CD4-positive, alpha-beta T cell (primary cell): ENCODE measurements at regions of chr20 and their contacts with region 1.

Region 1: DNA sequence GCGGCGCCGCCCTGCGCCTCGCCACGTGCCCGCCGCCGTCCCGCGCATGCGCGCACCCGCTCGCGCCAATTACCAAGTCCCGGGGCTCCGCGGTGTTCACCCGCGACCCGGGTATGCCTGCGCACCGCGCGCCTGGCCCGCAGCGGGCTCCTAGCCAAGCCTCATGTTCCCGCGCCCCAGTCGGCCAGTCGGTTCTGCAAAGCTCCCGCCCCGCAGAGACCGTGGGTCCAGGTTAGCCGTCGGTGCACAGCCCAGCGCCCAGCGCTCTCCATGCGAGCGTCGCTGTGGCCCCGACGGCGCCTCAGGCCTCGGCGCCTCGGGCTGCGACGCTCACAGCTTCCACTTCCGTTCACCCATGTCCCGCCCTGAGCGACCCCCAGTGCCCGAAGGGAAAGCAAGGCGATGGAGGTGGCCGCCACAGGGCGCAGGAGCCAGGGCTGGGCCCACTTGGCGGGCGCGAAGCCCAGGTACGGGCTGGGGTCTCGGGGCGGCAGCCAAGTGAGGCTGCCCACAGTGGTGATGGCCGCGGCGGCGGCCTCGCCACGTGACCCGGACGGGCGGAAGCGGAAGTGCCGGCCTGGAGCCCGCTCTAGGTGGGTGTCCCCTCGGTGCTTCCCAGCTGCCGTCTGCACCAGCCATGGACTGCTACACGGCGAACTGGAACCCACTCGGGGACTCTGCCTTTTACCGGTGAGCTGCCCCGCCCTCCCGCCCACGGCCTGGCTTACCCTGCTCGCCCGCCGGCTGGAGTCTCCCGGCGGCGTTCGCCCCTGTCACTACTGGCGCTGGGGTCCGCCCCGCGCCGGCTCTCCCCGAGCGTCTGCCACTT is at the starts of genes PCED1A and VPS16:
- DNase-seq: peak; percentile 78 to 94 (median 86)
- ATAC-seq: peak; percentile 95
- H3K4me3 ChIP-seq: peak within 1 kb of the TSS; percentile 93
- H3K4me3 Mint-ChIP-seq: peak within 1 kb of the TSS; percentile 93
- H3K27ac ChIP-seq: peak within 1 kb of the TSS; percentile 61 to 81
- H3K27ac Mint-ChIP-seq: peak within 1 kb of the TSS; percentile 75
- H3K4me1 ChIP-seq: peaks cover 31% of the 10 kb centered on the region
- H3K4me1 Mint-ChIP-seq: peaks cover 53% of the 10 kb centered on the region
- H3K27me3 ChIP-seq: no peaks in the 10 kb centered on the region
- H3K27me3 Mint-ChIP-seq: no peaks in the 10 kb centered on the region
- CTCF ChIP-seq: no peak
- total RNA-seq, gene PCED1A: 69.2 to 69.7 TPM
- total RNA-seq, gene VPS16: 38.2 to 40.6 TPM

Region 2: DNA sequence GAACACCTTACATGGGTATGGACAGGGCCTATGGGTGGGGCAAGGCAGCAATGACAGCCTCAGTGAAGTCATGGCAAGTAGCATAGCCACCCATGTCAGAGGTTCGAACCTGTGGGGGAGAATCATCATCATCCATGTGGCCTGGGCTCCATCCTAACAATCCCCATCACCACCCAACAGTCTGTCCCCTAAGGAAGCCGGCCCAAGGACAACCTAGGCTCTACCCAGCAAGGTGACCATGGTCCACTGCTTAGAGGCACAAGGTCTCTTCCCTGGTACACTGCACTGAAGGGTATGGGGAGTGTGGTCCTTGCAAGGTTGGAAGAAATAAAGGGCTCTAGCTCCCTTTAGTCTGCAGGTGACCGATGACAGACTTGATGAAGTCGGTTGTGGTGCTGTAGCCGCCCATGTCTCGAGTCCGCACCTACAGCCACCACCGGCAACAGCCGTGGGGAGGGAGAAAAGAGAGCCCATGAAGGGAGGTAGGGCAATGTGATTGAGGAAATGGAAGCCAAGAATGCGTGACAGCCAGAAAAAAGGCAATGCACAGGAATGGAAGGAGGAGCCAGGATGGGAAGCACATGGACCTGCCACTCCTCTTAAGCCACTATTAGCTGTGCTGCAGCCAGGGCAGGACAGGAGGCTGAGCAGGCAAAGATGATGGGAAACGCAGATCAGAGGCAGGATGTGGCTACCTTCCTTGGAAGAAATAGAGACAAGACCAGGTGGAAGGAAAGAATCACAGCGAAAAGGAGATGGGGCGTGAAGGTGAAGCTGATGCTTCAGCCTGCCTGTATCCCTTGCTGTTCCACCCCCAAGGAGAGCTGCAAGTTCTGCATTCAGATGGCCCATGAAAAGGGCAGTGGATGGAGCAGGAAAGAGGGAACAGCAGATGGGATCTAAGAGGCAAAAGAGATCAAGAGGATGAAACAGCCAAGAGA is 181.7 kb before region 1 on chr20:
- CTCF ChIA-PET with region 1: no interaction called
- POLR2A ChIA-PET with region 1: no interaction called
- intact Hi-C with region 1: loop called in 1 of 2 experiments (anchors 5 kb)
- DNase-seq: no peak
- ATAC-seq: peak; percentile 22
- H3K4me3 ChIP-seq: no peak overlapping the region
- H3K4me3 Mint-ChIP-seq: peak overlapping the region; percentile 22
- H3K27ac ChIP-seq: no peak overlapping the region
- H3K27ac Mint-ChIP-seq: peak overlapping the region; percentile 61
- H3K4me1 ChIP-seq: peaks cover 32% of the 10 kb centered on the region
- H3K4me1 Mint-ChIP-seq: peaks cover 40% of the 10 kb centered on the region
- H3K27me3 ChIP-seq: no peaks in the 10 kb centered on the region
- H3K27me3 Mint-ChIP-seq: no peaks in the 10 kb centered on the region
- CTCF ChIP-seq: no peak

Region 3: DNA sequence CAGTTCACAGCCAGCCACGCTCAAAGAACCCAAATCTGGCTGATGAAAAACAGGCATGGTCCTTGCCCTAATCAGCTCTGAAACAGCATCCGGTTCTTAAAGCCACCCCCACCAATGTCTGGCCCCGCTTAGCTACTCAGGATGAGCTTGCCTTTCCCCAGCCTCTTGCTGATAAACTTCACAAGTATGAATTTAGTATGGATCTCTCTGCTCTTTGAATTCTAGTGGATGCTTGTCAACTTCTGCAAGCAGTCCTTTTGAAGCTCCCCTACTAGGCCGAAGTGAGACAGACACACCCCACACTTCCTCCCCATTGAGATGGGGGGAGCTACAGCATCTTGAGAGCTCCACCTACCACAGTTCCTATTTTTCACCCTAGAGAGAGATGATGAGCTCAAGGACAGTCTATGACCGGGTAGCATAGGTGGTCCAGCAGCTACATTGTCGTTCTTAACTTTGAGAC is 111.1 kb before region 1 on chr20:
- CTCF ChIA-PET with region 1: no interaction called
- POLR2A ChIA-PET with region 1: interaction called, 10 read pairs
- intact Hi-C with region 1: no loop called
- DNase-seq: peak in 11 of 14 experiments; percentile 25 to 78 (median 38)
- ATAC-seq: peak; percentile 97
- H3K4me3 ChIP-seq: no peak overlapping the region
- H3K4me3 Mint-ChIP-seq: peak overlapping the region; percentile 66
- H3K27ac ChIP-seq: peak overlapping the region; percentile 47 to 53
- H3K27ac Mint-ChIP-seq: peak overlapping the region; percentile 88
- H3K4me1 ChIP-seq: peaks cover 19% of the 10 kb centered on the region
- H3K4me1 Mint-ChIP-seq: peaks cover 33% of the 10 kb centered on the region
- H3K27me3 ChIP-seq: no peaks in the 10 kb centered on the region
- H3K27me3 Mint-ChIP-seq: no peaks in the 10 kb centered on the region
- CTCF ChIP-seq: no peak

Region 4: DNA sequence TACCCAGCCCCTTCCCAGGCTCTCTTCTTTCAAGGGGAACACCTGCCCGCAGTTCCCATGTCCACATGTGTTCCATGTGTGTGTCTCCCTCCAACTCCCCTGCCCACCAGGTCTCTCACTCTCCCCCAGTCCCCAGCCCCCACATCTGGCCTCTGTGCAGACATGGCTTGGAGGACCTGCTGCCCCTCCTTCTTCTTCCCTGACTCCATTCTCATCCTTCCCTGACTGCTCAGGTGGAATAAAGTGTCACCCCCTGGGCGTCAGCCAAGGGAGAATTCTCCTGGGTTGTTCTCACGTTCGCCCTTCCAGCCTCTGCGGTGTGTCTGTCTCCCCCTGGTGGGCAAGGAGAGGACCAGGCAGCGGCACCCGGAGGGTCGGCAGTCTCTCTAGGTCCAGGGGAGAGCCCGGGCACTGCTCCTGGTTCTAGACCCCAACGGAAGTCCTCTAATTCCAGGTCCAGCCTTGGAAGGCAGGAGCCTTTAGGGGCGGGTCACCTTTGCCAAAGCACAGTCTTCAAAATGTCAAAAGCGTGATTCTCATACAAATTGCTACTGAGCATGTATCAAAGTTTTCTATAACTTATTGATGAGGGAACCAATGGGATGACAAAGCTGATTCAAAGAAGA is 97.3 kb before region 1 on chr20:
- CTCF ChIA-PET with region 1: no interaction called
- POLR2A ChIA-PET with region 1: interaction called, 10 read pairs
- intact Hi-C with region 1: loop called in 1 of 2 experiments (anchors 5 kb)
- DNase-seq: peak; percentile 60 to 88 (median 70)
- ATAC-seq: peak; percentile 54
- H3K4me3 ChIP-seq: no peak overlapping the region
- H3K4me3 Mint-ChIP-seq: peak overlapping the region; percentile 59
- H3K27ac ChIP-seq: peak overlapping the region in 1 of 2 donors; percentile 60
- H3K27ac Mint-ChIP-seq: peak overlapping the region; percentile 90
- H3K4me1 ChIP-seq: peaks cover 47% of the 10 kb centered on the region
- H3K4me1 Mint-ChIP-seq: peaks cover 51% of the 10 kb centered on the region
- H3K27me3 ChIP-seq: no peaks in the 10 kb centered on the region
- H3K27me3 Mint-ChIP-seq: no peaks in the 10 kb centered on the region
- CTCF ChIP-seq: peak; percentile 90

Region 5: GRCh38 chr20:2752567-2753460 is 87.5 kb before region 1 on chr20:
- CTCF ChIA-PET with region 1: interaction called, 4 read pairs
- POLR2A ChIA-PET with region 1: interaction called, 5 read pairs
- intact Hi-C with region 1: loop called in 1 of 2 experiments (anchors 5 kb)
- DNase-seq: peak in 13 of 14 experiments; percentile 19 to 76 (median 47)
- ATAC-seq: peak; percentile 37
- H3K4me3 ChIP-seq: peak overlapping the region; percentile 60
- H3K4me3 Mint-ChIP-seq: peak overlapping the region; percentile 90
- H3K27ac ChIP-seq: no peak overlapping the region
- H3K27ac Mint-ChIP-seq: no peak overlapping the region
- H3K4me1 ChIP-seq: peaks cover 40% of the 10 kb centered on the region
- H3K4me1 Mint-ChIP-seq: peaks cover 28% of the 10 kb centered on the region
- H3K27me3 ChIP-seq: peaks cover 12 to 13% of the 10 kb centered on the region in 2 experiments
- H3K27me3 Mint-ChIP-seq: peaks cover 17% of the 10 kb centered on the region
- CTCF ChIP-seq: peak; percentile 81

Region 6: DNA sequence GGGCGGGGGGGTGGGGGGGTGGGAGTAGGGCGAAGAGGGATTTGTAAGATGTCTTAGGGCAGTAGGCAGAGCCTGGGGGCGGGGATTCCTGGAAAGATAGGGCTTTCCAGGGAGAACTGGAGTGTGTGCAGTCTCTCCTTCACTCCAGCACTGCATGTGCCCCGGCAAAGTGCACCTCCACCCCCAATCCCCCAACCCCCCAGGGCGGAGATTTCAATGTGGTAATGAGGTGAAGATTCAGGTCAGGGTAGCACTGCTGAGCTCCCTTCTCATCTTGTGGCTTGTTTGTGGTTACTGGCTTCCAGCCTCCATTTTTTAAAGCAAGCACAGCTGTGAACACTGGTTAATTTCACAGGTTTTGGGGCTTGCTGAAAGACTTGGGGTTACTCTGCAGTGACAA is 18.3 kb before region 1 on chr20:
- CTCF ChIA-PET with region 1: no interaction called
- POLR2A ChIA-PET with region 1: interaction called, 13 read pairs
- intact Hi-C with region 1: no loop called
- DNase-seq: peak in 12 of 14 experiments; percentile 20 to 75 (median 38)
- ATAC-seq: peak; percentile 94
- H3K4me3 ChIP-seq: peak overlapping the region; percentile 26
- H3K4me3 Mint-ChIP-seq: peak overlapping the region; percentile 75
- H3K27ac ChIP-seq: no peak overlapping the region
- H3K27ac Mint-ChIP-seq: no peak overlapping the region
- H3K4me1 ChIP-seq: peaks cover 28% of the 10 kb centered on the region
- H3K4me1 Mint-ChIP-seq: peaks cover 38% of the 10 kb centered on the region
- H3K27me3 ChIP-seq: peaks cover 4 to 10% of the 10 kb centered on the region in 2 experiments
- H3K27me3 Mint-ChIP-seq: peaks cover 39% of the 10 kb centered on the region
- CTCF ChIP-seq: no peak

Region 7: DNA sequence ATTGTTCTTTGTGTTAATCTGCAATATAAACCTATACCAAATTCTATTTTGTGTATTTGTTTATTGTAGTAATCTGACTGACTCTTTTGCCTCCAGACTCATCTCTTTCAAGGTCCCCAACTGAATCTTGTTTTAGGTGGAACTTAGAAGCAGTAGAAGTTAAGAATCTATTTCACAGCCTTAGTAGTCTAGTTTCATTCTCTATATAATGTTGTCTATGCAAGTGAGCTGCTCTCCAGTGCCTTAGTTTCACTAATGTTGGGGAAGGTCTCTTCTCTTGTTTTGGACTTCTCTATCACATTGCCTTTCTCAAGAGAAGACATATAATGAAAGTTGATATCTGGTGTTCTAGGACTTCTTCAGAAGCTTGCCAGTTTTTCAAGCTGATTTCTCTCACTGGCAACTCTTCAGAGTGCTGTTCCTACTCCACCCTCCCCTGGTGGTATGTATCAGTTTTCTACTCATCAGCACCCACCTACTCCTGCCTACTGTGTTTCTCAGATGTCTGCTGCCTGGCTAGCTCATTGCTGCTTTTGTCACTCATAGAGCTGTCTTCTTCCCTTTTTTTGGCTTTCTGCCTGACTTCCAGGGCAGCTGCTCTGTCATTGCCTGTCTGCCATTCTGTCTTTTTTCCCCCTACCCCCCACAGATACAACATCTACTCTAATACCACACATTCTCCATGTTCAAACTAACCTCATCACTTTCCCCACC is 115.1 kb after region 1 on chr20:
- CTCF ChIA-PET with region 1: no interaction called
- POLR2A ChIA-PET with region 1: no interaction called
- intact Hi-C with region 1: no loop called
- DNase-seq: no peak
- ATAC-seq: no peak
- H3K4me3 ChIP-seq: no peak overlapping the region
- H3K4me3 Mint-ChIP-seq: no peak overlapping the region
- H3K27ac ChIP-seq: no peak overlapping the region
- H3K27ac Mint-ChIP-seq: no peak overlapping the region
- H3K4me1 ChIP-seq: no peaks in the 10 kb centered on the region
- H3K4me1 Mint-ChIP-seq: no peaks in the 10 kb centered on the region
- H3K27me3 ChIP-seq: no peaks in the 10 kb centered on the region
- H3K27me3 Mint-ChIP-seq: no peaks in the 10 kb centered on the region
- CTCF ChIP-seq: no peak

Region 8: DNA sequence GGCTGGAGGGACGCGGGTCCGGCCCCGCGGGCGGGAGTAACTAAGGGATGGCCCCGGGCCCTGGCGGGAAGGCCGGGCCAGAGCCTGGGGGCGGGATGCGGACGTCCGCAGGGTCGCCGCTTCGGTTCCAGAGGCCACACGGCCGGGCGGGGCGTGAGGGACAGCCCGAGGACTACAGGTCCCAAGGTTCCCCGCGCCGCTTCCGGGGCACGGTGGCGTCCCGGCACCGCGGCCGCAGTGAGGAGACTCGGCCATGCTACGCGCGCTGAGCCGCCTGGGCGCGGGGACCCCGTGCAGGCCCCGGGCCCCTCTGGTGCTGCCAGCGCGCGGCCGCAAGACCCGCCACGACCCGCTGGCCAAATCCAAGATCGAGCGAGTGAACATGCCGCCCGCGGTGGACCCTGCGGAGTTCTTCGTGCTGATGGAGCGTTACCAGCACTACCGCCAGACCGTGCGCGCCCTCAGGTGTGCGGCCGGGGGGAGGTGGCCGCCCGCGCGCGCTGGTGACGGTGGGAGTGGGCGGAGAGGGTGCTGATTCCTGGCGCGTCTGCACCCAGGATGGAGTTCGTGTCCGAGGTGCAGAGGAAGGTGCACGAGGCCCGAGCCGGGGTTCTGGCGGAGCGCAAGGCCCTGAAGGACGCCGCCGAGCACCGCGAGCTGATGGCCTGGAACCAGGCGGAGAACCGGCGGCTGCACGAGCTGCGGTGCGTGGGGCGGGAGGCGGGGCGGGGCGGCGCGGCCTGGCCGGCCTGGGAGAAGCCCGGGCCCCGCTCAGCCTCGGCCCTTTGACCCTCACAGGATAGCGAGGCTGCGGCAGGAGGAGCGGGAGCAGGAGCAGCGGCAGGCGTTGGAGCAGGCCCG is 205.7 kb after region 1 on chr20 and contains the start of gene MRPS26:
- CTCF ChIA-PET with region 1: no interaction called
- POLR2A ChIA-PET with region 1: no interaction called
- intact Hi-C with region 1: loop called in 1 of 2 experiments (anchors 5 kb)
- DNase-seq: peak; percentile 57 to 87 (median 76)
- ATAC-seq: peak; percentile 86
- H3K4me3 ChIP-seq: peak within 1 kb of the TSS; percentile 76
- H3K4me3 Mint-ChIP-seq: peak within 1 kb of the TSS; percentile 95
- H3K27ac ChIP-seq: peak within 1 kb of the TSS; percentile 48 to 49
- H3K27ac Mint-ChIP-seq: peak within 1 kb of the TSS; percentile 83
- H3K4me1 ChIP-seq: peaks cover 27% of the 10 kb centered on the region
- H3K4me1 Mint-ChIP-seq: peaks cover 21% of the 10 kb centered on the region
- H3K27me3 ChIP-seq: no peaks in the 10 kb centered on the region
- H3K27me3 Mint-ChIP-seq: no peaks in the 10 kb centered on the region
- CTCF ChIP-seq: no peak
- total RNA-seq, gene MRPS26: 19.3 to 22.7 TPM